ENCODE measurements at regions of chr11 and their contacts with region 1.

Region 1: GRCh38 chr11:123246749-123247495 is 51.9 kb upstream of the CLMP start:
- DNase-seq: peak; percentile 65
- H3K4me3 ChIP-seq: no peak overlapping the region
- H3K27ac ChIP-seq: no peak overlapping the region
- H3K27me3 ChIP-seq: no peaks in the 10 kb centered on the region
- CTCF ChIP-seq: peak; percentile 99

Region 2: DNA sequence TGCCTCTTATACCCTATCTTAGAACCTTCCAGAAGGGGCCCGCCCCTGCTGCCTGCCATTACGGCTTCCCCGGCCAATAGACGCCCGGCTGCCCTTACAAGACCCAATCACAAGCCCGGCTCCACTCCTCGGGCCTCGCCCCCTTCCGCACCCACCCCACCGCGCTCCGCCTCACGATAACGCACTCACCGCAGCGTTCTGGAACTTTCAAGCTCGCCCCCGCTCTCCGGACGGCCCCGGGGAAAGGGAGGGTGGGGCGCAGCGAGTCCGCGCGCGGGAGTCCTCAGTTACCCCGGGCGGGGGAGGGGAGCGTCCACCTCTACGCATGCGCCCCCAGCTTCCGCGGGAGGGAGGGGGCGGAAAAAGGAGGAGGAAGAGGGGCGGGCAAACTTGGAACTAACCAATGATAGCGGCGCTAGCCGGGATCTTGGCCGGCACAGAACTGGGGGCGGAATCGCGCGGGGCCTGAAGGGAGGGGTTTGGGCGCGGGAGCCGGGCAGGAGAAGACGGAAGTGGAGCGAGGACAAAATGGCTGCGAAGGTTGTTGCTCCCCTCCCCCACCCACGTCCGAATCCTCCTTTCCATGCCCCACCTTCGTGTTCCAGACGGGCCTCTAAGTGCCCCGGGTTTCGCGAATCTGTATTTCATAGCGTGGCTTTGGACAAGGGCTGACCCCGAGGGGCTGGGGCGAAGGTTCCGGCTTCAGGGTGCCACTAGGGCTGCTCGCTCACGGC is 184.6 kb before region 1 on chr11:
- CTCF ChIA-PET with region 1: interaction called, 15 read pairs
- POLR2A ChIA-PET with region 1: interaction called, 8 read pairs
- DNase-seq: peak; percentile 100
- H3K4me3 ChIP-seq: peak overlapping the region; percentile 95
- H3K27ac ChIP-seq: peak overlapping the region; percentile 99
- H3K27me3 ChIP-seq: no peaks in the 10 kb centered on the region
- CTCF ChIP-seq: 0 out of 2 replicates have a peak, but pooled peaks have one; percentile 13

Region 3: GRCh38 chr11:123110356-123110755 is 136.6 kb before region 1 on chr11:
- CTCF ChIA-PET with region 1: interaction called, 130 read pairs
- POLR2A ChIA-PET with region 1: no interaction called
- DNase-seq: no peak
- H3K4me3 ChIP-seq: no peak overlapping the region
- H3K27ac ChIP-seq: no peak overlapping the region
- H3K27me3 ChIP-seq: no peaks in the 10 kb centered on the region
- CTCF ChIP-seq: no peak

Region 4: GRCh38 chr11:123145220-123145619 is 101.7 kb before region 1 on chr11:
- CTCF ChIA-PET with region 1: interaction called, 16 read pairs
- POLR2A ChIA-PET with region 1: no interaction called
- DNase-seq: no peak
- H3K4me3 ChIP-seq: no peak overlapping the region
- H3K27ac ChIP-seq: peak overlapping the region; percentile 22
- H3K27me3 ChIP-seq: no peaks in the 10 kb centered on the region
- CTCF ChIP-seq: no peak

Region 5: GRCh38 chr11:123174196-123175183 is 72.4 kb before region 1 on chr11:
- CTCF ChIA-PET with region 1: interaction called, 18 read pairs
- POLR2A ChIA-PET with region 1: interaction called, 7 read pairs
- DNase-seq: peak; percentile 96
- H3K4me3 ChIP-seq: no peak overlapping the region
- H3K27ac ChIP-seq: peak overlapping the region; percentile 98
- H3K27me3 ChIP-seq: no peaks in the 10 kb centered on the region
- CTCF ChIP-seq: no peak

Region 6: GRCh38 chr11:123202155-123203151 is 44.5 kb before region 1 on chr11:
- CTCF ChIA-PET with region 1: interaction called, 12 read pairs
- POLR2A ChIA-PET with region 1: interaction called, 4 read pairs
- DNase-seq: no peak
- H3K4me3 ChIP-seq: no peak overlapping the region
- H3K27ac ChIP-seq: peak overlapping the region; percentile 3
- H3K27me3 ChIP-seq: no peaks in the 10 kb centered on the region
- CTCF ChIP-seq: no peak

Measured in AG04450 (cell line).